PC-3 (cell line): ENCODE measurements at regions of chr16 and their contacts with region 1.

Region 1: DNA sequence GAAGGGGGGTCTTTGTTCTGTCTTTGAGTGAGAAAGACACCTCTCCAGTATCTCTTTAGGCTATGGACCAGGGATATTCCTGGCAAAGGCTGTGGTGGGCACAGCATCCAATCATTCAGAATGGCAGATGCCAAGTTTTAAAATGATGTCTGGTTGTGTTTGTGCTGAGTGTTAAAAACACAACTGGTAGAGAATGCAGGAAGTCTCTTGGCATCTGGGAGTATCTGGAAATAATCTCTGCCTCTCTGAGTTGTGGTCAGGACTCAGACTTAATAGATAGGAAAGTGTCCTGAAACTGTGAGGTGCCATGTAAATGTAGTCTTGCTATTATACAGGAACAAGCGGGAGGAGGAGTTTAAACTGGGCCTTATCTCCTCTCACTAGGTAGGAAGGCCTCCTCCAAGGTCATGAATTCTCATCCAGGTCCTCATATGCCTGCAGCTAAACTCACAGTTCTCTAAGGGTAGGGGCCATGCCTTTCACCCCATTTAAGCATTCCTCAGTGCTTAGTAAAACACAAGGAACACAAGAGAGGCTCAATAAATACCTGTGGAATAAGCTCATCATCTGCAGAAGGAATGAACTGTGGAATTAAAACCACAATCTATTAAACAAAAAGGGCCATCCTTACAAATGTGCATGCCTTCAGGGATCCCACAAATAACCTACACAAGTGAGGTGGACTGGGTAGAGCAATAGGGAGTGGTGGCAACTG is 317.6 kb downstream of the CBLN1 start:
- DNase-seq: peak; percentile 91
- ATAC-seq: peak; percentile 79
- H3K4me3 ChIP-seq: peak overlapping the region; percentile 41; the same call in 1 of the 2 replicates
- H3K27ac ChIP-seq: peak overlapping the region; percentile 97
- H3K4me1 ChIP-seq: peaks cover 71% of the 10 kb centered on the region
- H3K27me3 ChIP-seq: no peaks in the 10 kb centered on the region
- CTCF ChIP-seq: no peak

Region 2: DNA sequence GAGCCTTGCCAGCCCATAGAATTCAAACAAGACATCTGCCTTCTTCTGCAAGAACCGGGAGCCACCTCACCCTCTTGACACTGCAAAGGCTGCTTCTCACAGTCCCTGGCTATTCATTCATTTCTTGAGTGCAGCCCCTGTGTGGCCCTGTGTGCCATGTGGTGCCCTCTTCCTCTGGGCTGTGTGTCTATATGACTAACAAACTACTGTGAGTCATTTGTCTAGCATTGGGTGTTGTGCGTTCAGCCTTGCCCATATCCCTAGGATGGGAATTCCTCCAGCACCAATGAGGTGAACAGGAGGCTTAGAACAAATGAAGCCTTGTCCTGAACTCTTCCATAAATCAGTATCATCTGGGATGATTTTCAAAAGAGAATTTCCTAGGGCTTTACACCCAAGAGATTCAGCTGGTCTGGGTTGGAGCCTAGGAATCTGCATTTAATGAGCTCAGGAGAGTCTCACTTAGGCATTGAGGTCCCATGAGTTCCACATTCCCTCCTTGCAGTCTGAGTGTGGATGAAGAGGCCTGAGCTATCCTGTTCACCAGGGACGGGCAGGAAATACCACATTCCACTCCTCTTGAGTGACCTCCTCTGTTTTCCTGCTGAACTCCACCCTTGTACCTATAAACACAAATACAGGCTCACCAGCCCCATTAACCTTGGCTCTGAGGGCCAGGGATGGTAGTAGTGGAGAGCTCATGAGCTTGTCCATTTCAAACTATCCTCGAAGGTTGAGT is 45.4 kb before region 1 on chr16:
- CTCF ChIA-PET with region 1: no interaction called
- POLR2A ChIA-PET with region 1: no interaction called
- intact Hi-C with region 1: loop called (anchors 2 kb)
- DNase-seq: peak; percentile 61
- ATAC-seq: peak; percentile 83
- H3K4me3 ChIP-seq: no peak overlapping the region
- H3K27ac ChIP-seq: peak overlapping the region; percentile 30
- H3K4me1 ChIP-seq: peaks cover 15% of the 10 kb centered on the region
- H3K27me3 ChIP-seq: no peaks in the 10 kb centered on the region
- CTCF ChIP-seq: no peak

Region 3: GRCh38 chr16:49993579-49993978 is 1029.5 kb after region 1 on chr16:
- CTCF ChIA-PET with region 1: no interaction called
- POLR2A ChIA-PET with region 1: no interaction called
- intact Hi-C with region 1: no loop called
- DNase-seq: no peak
- ATAC-seq: no peak
- H3K4me3 ChIP-seq: no peak overlapping the region
- H3K27ac ChIP-seq: no peak overlapping the region
- H3K4me1 ChIP-seq: no peaks in the 10 kb centered on the region
- H3K27me3 ChIP-seq: peaks cover 5% of the 10 kb centered on the region
- CTCF ChIP-seq: no peak

Region 4: GRCh38 chr16:50185005-50185505 is 1221.0 kb after region 1 on chr16:
- CTCF ChIA-PET with region 1: no interaction called
- POLR2A ChIA-PET with region 1: no interaction called
- intact Hi-C with region 1: no loop called
- DNase-seq: no peak
- ATAC-seq: no peak
- H3K4me3 ChIP-seq: no peak overlapping the region
- H3K27ac ChIP-seq: no peak overlapping the region
- H3K4me1 ChIP-seq: no peaks in the 10 kb centered on the region
- H3K27me3 ChIP-seq: no peaks in the 10 kb centered on the region
- CTCF ChIP-seq: no peak